ENCODE measurements at regions of chr7 and their contacts with region 1.

Region 1: DNA sequence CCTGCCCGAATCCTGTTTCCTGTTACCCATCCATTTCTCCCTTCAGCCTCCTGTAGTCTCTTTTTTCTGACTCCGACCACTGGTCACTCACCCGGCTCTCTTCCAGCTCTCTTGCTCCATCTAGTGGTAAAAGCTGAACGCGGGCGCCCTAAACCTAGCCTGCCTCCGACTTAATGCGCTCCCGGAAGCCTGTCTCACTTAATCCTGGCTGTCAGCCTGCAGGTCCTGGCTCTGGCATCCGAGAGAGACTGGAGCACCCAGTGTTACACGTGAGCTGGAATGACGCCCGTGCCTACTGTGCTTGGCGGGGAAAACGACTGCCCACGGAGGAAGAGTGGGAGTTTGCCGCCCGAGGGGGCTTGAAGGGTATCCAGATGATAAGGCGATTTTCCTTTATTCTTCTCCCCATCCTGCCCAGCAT is 10.3 kb downstream of the SUMF2 start:
- DNase-seq: peak; percentile 83

Region 2: DNA sequence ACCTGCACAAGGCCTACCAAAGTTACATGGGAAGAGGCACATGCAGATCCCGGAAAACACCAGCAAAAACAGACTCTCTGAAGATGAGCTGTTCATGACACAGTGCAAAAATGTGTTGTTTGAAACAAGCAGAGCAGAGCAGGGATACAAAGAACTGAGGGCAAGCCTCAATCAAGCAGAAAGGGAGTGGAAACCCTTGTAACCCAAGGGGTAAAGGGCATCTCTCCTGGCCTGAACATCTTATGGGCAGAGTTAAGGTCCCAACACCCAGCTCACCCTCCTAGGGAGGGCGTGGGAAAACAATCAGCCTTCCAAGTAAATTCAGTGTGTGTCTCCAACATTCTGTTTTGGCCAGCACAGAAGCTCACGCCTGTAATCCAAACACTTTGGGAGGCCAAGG is 33.6 kb before region 1 on chr7:
- CTCF ChIA-PET with region 1: no interaction called
- POLR2A ChIA-PET with region 1: no interaction called
- DNase-seq: no peak

Region 3: GRCh38 chr7:56063882-56064625 is 10.3 kb before region 1 on chr7 and contains the start of gene SUMF2:
- CTCF ChIA-PET with region 1: interaction called, 10 read pairs
- POLR2A ChIA-PET with region 1: no interaction called
- DNase-seq: peak; percentile 94